WTC11 (cell line): ENCODE measurements at regions of chr11 and their contacts with region 1.

Region 1: GRCh38 chr11:65497141-65498041 is 1.5 kb upstream of the MALAT1 start:
- DNase-seq: peak; percentile 98
- ATAC-seq: peak; percentile 89
- H3K4me3 Mint-ChIP-seq: peak overlapping the region; percentile 63
- H3K27ac Mint-ChIP-seq: peak overlapping the region; percentile 97
- H3K4me1 Mint-ChIP-seq: peaks cover 39% of the 10 kb centered on the region
- H3K27me3 Mint-ChIP-seq: no peaks in the 10 kb centered on the region
- CTCF ChIP-seq: no peak

Region 2: DNA sequence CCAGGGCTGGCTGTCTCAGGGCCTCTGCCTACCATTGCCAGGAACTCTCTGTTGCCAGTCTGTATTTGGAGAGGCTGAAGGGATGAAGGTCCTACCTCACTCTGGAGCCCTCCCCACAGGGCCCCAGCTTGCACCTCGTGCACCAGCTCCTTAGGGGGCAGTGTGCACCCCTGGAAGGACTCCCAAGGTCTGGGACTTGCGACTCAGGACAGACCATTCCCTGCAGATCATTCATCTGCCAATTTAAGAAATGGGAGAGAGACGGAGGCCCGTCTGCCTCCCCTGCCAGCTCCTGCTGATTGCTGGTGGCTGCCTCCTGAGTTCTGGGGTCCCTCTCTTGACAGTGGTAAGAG is 26.0 kb before region 1 on chr11:
- CTCF ChIA-PET with region 1: interaction called, 129 read pairs
- POLR2A ChIA-PET with region 1: interaction called, 248 read pairs
- DNase-seq: peak; percentile 69
- ATAC-seq: peak; percentile 87
- H3K4me3 Mint-ChIP-seq: no peak overlapping the region
- H3K27ac Mint-ChIP-seq: no peak overlapping the region
- H3K4me1 Mint-ChIP-seq: peaks cover 2% of the 10 kb centered on the region
- H3K27me3 Mint-ChIP-seq: peaks cover 11% of the 10 kb centered on the region
- CTCF ChIP-seq: 0 out of 2 replicates have a peak, but pooled peaks have one; percentile 16

Region 3: GRCh38 chr11:65477149-65477965 is 20.0 kb before region 1 on chr11:
- CTCF ChIA-PET with region 1: interaction called, 129 read pairs
- POLR2A ChIA-PET with region 1: interaction called, 248 read pairs
- DNase-seq: peak; percentile 87
- ATAC-seq: peak; percentile 80
- H3K4me3 Mint-ChIP-seq: peak overlapping the region; percentile 79
- H3K27ac Mint-ChIP-seq: peak overlapping the region; percentile 99
- H3K4me1 Mint-ChIP-seq: peaks cover 34% of the 10 kb centered on the region
- H3K27me3 Mint-ChIP-seq: no peaks in the 10 kb centered on the region; the same call in 1 of the 2 replicates
- CTCF ChIP-seq: no peak

Region 4: DNA sequence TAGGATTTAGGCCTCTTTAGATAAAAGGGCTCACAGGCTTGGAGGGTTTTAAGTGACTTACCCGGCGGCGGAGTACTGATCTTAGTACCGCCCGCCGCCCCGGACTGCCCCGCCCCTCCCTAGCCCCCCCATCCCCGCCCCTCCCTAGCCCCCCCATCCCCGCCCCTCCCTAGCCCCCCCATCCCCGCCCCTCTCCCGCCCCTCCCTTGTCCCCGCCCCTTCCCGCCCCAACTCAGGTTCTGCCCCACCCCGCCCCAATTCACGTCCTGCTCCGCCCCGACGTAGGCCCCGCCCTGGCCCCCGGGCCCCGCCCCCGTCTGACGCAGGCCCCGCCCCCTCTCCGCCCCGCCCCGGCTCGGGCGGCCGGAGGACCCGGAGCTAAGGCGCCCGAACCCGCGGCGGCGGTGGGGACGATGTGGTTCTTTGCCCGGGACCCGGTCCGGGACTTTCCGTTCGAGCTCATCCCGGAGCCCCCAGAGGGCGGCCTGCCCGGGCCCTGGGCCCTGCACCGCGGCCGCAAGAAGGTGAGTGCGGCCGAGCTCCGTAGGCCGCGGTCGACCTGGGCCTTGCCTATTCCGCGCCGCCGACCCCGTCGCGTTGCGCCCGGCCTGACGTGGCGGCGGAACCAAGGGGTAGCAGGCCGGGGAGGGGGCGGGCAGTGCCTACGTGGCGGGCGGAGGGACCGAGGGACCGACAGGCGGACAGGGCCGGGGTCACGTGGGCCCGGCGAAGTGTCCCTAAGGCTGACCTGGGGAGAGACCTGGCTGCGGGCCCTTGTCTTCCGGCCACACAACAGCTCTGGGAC is 27.6 kb after region 1 on chr11 and contains the start of gene SCYL1:
- CTCF ChIA-PET with region 1: no interaction called
- POLR2A ChIA-PET with region 1: interaction called, 11 read pairs
- DNase-seq: peak; percentile 78
- ATAC-seq: peak; percentile 82
- H3K4me3 Mint-ChIP-seq: peak within 1 kb of the TSS; percentile 73
- H3K27ac Mint-ChIP-seq: no peak within 1 kb of the TSS; the same call in 1 of the 2 replicates
- H3K4me1 Mint-ChIP-seq: peaks cover 19% of the 10 kb centered on the region
- H3K27me3 Mint-ChIP-seq: peaks cover 11% of the 10 kb centered on the region
- CTCF ChIP-seq: no peak
- total RNA-seq, gene SCYL1: 69.6 to 76.8 TPM (median 73.0 TPM) in 3 replicates